ENCODE measurements at regions of chr14 and their contacts with region 1.

Region 1: GRCh38 chr14:101774006-101774795 is 12.7 kb downstream of the PPP2R5C start:
- DNase-seq: no peak
- ATAC-seq: no peak
- H3K4me3 ChIP-seq: no peak overlapping the region
- H3K4me3 Mint-ChIP-seq: no peak overlapping the region
- H3K27ac ChIP-seq: no peak overlapping the region
- H3K27ac Mint-ChIP-seq: peak overlapping the region; percentile 47 to 56
- H3K4me1 ChIP-seq: peaks cover 26% of the 10 kb centered on the region
- H3K4me1 Mint-ChIP-seq: peaks cover 40 to 57% of the 10 kb centered on the region in 2 donors
- H3K27me3 ChIP-seq: no peaks in the 10 kb centered on the region
- H3K27me3 Mint-ChIP-seq: peaks cover 0 to 2% of the 10 kb centered on the region in 2 donors
- CTCF ChIP-seq: no peak

Region 2: GRCh38 chr14:101687756-101688546 is 86.2 kb before region 1 on chr14:
- intact Hi-C with region 1: no loop called
- DNase-seq: no peak
- ATAC-seq: no peak
- H3K4me3 ChIP-seq: no peak overlapping the region
- H3K4me3 Mint-ChIP-seq: no peak overlapping the region
- H3K27ac ChIP-seq: no peak overlapping the region
- H3K27ac Mint-ChIP-seq: no peak overlapping the region
- H3K4me1 ChIP-seq: no peaks in the 10 kb centered on the region
- H3K4me1 Mint-ChIP-seq: no peaks in the 10 kb centered on the region
- H3K27me3 ChIP-seq: no peaks in the 10 kb centered on the region
- H3K27me3 Mint-ChIP-seq: peaks cover 12 to 50% of the 10 kb centered on the region in 2 donors
- CTCF ChIP-seq: no peak

Region 3: GRCh38 chr14:101721951-101722661 is 52.1 kb before region 1 on chr14:
- intact Hi-C with region 1: no loop called
- DNase-seq: peak; percentile 72 to 95
- ATAC-seq: peak; percentile 55 to 81 (median 70)
- H3K4me3 ChIP-seq: peak overlapping the region; percentile 10
- H3K4me3 Mint-ChIP-seq: peak overlapping the region; percentile 90
- H3K27ac ChIP-seq: peak overlapping the region; percentile 95
- H3K27ac Mint-ChIP-seq: peak overlapping the region; percentile 96 to 100
- H3K4me1 ChIP-seq: peaks cover 76% of the 10 kb centered on the region
- H3K4me1 Mint-ChIP-seq: peaks cover 70 to 72% of the 10 kb centered on the region in 2 donors
- H3K27me3 ChIP-seq: no peaks in the 10 kb centered on the region
- H3K27me3 Mint-ChIP-seq: no peaks in the 10 kb centered on the region
- CTCF ChIP-seq: no peak

Region 4: DNA sequence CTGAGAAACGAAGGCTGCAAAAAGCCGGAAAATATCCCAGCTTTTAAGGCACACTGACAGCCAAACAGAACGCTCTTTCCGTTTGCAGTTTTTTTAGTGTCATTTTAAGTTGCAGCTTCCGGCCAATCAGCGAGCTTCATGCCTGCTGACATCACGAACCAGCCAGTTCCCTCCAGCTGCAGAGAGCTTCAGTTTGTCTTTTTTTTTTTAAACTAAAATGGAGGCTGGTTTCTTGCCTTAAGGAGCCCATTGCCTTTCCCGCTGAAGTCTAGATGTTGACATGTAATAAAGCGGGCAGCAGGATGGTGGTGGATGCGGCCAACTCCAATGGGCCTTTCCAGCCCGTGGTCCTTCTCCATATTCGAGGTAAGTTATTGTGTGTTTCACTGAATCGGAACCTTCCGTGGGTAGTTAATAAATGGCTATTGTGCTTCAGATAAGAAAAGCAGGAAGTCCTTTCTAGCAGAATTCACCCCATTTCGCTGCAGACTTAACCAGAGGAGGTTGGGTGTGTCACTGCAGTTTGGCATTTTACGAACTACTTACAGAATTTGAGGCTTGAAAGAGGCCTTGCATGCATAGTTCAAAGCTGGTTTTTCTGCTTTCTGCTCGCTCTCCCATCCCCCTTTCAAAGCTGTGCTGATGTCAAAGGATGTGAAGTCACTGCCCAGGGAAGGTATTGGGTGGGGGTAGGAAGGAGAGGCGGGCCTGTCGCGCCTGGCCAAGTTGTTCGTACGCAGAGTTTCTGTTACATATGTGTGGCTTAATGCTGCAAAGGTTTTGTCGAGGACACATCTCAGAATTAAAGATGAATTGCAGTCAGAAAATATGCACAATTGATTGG is 35.7 kb after region 1 on chr14:
- intact Hi-C with region 1: no loop called
- DNase-seq: peak; percentile 75 to 96
- ATAC-seq: peak; percentile 88 to 96 (median 91)
- H3K4me3 ChIP-seq: peak overlapping the region; percentile 81
- H3K4me3 Mint-ChIP-seq: peak overlapping the region; percentile 98
- H3K27ac ChIP-seq: peak overlapping the region; percentile 98
- H3K27ac Mint-ChIP-seq: peak overlapping the region; percentile 97 to 99
- H3K4me1 ChIP-seq: peaks cover 29% of the 10 kb centered on the region
- H3K4me1 Mint-ChIP-seq: peaks cover 52 to 56% of the 10 kb centered on the region in 2 donors
- H3K27me3 ChIP-seq: no peaks in the 10 kb centered on the region
- H3K27me3 Mint-ChIP-seq: no peaks in the 10 kb centered on the region
- CTCF ChIP-seq: no peak

Region 5: DNA sequence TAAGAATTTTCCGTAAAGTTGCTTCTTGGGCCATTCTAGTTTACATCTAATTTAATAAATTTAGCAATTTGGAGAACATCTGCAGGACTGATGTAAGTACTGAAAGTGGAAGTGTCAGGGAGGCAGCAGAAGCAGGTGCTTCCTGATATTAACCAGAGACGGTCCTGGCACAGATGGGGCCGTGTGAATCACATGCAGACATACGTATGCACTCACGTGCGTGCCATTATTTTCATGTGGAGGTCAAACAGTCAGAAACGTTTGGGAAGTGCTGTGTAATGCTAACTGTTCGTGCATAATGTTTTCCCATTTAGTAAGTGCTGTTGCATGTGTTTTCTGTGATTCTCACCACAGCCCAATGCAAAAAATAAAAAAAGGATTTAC is 102.3 kb after region 1 on chr14:
- intact Hi-C with region 1: loop called (anchors 2 kb)
- DNase-seq: peak; percentile 58 to 91
- ATAC-seq: peak; percentile 59 to 84 (median 74)
- H3K4me3 ChIP-seq: no peak overlapping the region
- H3K4me3 Mint-ChIP-seq: peak overlapping the region; percentile 76
- H3K27ac ChIP-seq: peak overlapping the region; percentile 86
- H3K27ac Mint-ChIP-seq: peak overlapping the region; percentile 93 to 94
- H3K4me1 ChIP-seq: peaks cover 62% of the 10 kb centered on the region
- H3K4me1 Mint-ChIP-seq: peaks cover 81 to 89% of the 10 kb centered on the region in 2 donors
- H3K27me3 ChIP-seq: no peaks in the 10 kb centered on the region
- H3K27me3 Mint-ChIP-seq: no peaks in the 10 kb centered on the region
- CTCF ChIP-seq: no peak

Region 6: GRCh38 chr14:101889898-101890297 is 115.7 kb after region 1 on chr14:
- intact Hi-C with region 1: loop called (anchors 5 kb)
- DNase-seq: peak in 1 of 2 donors; percentile 39
- ATAC-seq: peak in 1 of 3 donors; percentile 40
- H3K4me3 ChIP-seq: no peak overlapping the region
- H3K4me3 Mint-ChIP-seq: no peak overlapping the region
- H3K27ac ChIP-seq: no peak overlapping the region
- H3K27ac Mint-ChIP-seq: peak overlapping the region; percentile 58 to 72
- H3K4me1 ChIP-seq: no peaks in the 10 kb centered on the region
- H3K4me1 Mint-ChIP-seq: no peaks in the 10 kb centered on the region
- H3K27me3 ChIP-seq: no peaks in the 10 kb centered on the region
- H3K27me3 Mint-ChIP-seq: no peaks in the 10 kb centered on the region
- CTCF ChIP-seq: no peak

Region 7: GRCh38 chr14:101964297-101965144 is 190.3 kb after region 1 on chr14 and contains the start of gene DYNC1H1:
- intact Hi-C with region 1: loop called (anchors 5 kb)
- DNase-seq: peak; percentile 91 to 95
- ATAC-seq: peak; percentile 85 to 93 (median 89)
- H3K4me3 ChIP-seq: peak within 1 kb of the TSS; percentile 73
- H3K4me3 Mint-ChIP-seq: peak within 1 kb of the TSS; percentile 95
- H3K27ac ChIP-seq: peak within 1 kb of the TSS; percentile 84
- H3K27ac Mint-ChIP-seq: peak within 1 kb of the TSS; percentile 90 to 91
- H3K4me1 ChIP-seq: peaks cover 22% of the 10 kb centered on the region
- H3K4me1 Mint-ChIP-seq: peaks cover 35 to 45% of the 10 kb centered on the region in 2 donors
- H3K27me3 ChIP-seq: no peaks in the 10 kb centered on the region
- H3K27me3 Mint-ChIP-seq: peaks cover 0 to 2% of the 10 kb centered on the region in 2 donors
- CTCF ChIP-seq: no peak
- total RNA-seq, gene DYNC1H1: 313 to 381 (median 349) TPM

Measured in natural killer cell (primary cell).